ENCODE measurements at regions of chr1 and their contacts with region 1.

Region 1: DNA sequence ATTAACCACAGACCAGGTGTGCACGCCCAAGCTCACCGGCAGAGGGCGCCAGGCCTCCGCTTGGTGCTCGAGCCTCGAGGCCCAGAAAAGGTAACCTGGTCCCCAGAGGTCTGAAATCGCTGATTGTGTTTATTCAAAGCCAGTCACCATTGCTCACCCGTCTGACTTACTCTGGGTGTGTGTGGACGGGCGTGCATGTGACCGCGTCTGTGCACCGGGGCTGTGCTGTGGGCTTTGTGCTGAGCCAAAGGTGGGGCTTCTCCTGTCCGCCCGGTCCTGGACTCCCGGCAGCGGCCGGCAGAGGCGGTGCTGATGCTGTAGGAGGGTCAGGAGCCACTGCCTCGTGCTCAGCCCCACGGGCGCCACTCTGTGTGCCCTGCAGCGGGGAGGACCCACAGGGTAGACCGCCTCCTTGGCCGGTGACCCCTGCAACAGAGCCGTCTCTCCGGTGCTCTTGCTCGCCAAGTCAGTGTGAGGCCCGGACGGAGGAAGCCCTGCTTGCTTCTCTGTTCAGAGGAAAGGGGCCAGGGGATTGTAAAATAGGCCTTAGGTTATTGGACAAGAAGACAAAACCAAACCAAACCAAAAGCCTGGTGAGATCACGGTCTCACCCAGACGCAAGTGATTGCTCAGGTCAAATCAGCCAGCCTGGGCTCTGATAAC is 32.0 kb upstream of the BTG2 start:
- DNase-seq: peak; percentile 93
- H3K4me3 Mint-ChIP-seq: peak overlapping the region; percentile 67
- H3K27ac Mint-ChIP-seq: peak overlapping the region; percentile 84
- H3K4me1 Mint-ChIP-seq: peaks cover 68% of the 10 kb centered on the region
- H3K27me3 Mint-ChIP-seq: no peaks in the 10 kb centered on the region

Region 2: GRCh38 chr1:203076031-203076511 is 197.3 kb before region 1 on chr1:
- CTCF ChIA-PET with region 1: no interaction called
- DNase-seq: no peak
- H3K4me3 Mint-ChIP-seq: peak overlapping the region; percentile 52
- H3K27ac Mint-ChIP-seq: no peak overlapping the region
- H3K4me1 Mint-ChIP-seq: peaks cover 8% of the 10 kb centered on the region
- H3K27me3 Mint-ChIP-seq: peaks cover 63% of the 10 kb centered on the region

Region 3: GRCh38 chr1:203166566-203166940 is 106.8 kb before region 1 on chr1:
- CTCF ChIA-PET with region 1: no interaction called
- DNase-seq: no peak
- H3K4me3 Mint-ChIP-seq: no peak overlapping the region
- H3K27ac Mint-ChIP-seq: no peak overlapping the region
- H3K4me1 Mint-ChIP-seq: no peaks in the 10 kb centered on the region
- H3K27me3 Mint-ChIP-seq: peaks cover 39% of the 10 kb centered on the region

Region 4: GRCh38 chr1:203290261-203291089 is 17.1 kb after region 1 on chr1:
- CTCF ChIA-PET with region 1: interaction called, 71 read pairs
- DNase-seq: peak; percentile 99
- H3K4me3 Mint-ChIP-seq: peak overlapping the region; percentile 76
- H3K27ac Mint-ChIP-seq: peak overlapping the region; percentile 100
- H3K4me1 Mint-ChIP-seq: peaks cover 80% of the 10 kb centered on the region
- H3K27me3 Mint-ChIP-seq: no peaks in the 10 kb centered on the region

Region 5: GRCh38 chr1:203304919-203305808 is 31.8 kb after region 1 on chr1 and contains the start of gene BTG2:
- CTCF ChIA-PET with region 1: interaction called, 94 read pairs
- DNase-seq: peak; percentile 94
- H3K4me3 Mint-ChIP-seq: peak within 1 kb of the TSS; percentile 86
- H3K27ac Mint-ChIP-seq: peak within 1 kb of the TSS; percentile 90
- H3K4me1 Mint-ChIP-seq: peaks cover 61% of the 10 kb centered on the region
- H3K27me3 Mint-ChIP-seq: no peaks in the 10 kb centered on the region

Region 6: GRCh38 chr1:203326830-203327683 is 53.7 kb after region 1 on chr1:
- CTCF ChIA-PET with region 1: interaction called, 591 read pairs
- DNase-seq: peak; percentile 96
- H3K4me3 Mint-ChIP-seq: peak overlapping the region; percentile 74
- H3K27ac Mint-ChIP-seq: peak overlapping the region; percentile 94
- H3K4me1 Mint-ChIP-seq: peaks cover 66% of the 10 kb centered on the region
- H3K27me3 Mint-ChIP-seq: peaks cover 5% of the 10 kb centered on the region